ENCODE measurements at regions of chr19 and their contacts with region 1.

Region 1: DNA sequence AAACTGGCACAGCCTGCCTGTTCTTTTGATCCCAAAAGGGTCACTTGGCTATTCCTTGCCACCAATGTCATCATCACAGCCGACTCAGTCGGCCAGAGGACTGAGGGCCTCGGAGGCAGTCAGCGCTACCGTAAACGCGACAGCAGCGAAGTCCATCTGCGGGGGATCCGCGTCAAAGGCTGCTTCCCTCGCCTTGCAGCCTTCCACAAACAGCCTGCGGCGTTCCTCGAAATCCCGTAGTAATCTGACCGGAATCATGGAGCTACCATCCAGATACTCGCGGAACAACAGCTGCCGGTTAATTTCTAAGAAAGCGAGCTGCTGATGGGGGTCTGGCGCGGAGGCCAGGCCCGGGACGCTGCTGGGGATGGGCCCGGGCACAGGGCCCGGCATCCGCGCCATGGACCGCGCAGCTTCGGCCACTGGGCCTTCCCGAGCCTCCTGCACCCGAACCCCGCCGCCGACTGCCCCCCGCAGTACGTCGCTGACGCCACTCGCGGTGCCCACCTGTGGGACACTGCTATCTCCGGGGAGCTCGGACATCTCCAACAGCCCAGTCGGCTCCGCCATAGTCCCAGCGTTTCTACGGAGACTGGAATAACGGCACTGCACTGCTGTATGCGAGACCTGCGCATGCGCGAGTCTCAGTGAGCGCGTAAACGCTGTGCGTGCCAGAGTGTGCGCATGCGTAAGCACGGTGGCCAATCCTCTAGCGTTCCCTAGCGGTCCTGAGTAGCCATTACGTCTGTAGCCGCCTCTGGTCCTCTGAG is at the start of gene EID2B:
- DNase-seq: peak; percentile 95
- H3K4me3 ChIP-seq: peak within 1 kb of the TSS; percentile 76 to 83
- H3K27ac ChIP-seq: peak within 1 kb of the TSS; percentile 54 to 77
- H3K4me1 ChIP-seq: no peaks in the 10 kb centered on the region; a peak in 2 of 4 replicates
- H3K27me3 ChIP-seq: no peaks in the 10 kb centered on the region
- CTCF ChIP-seq: peak; percentile 92
- EP300 ChIP-seq: no peak
- RAD21 ChIP-seq: peak; percentile 99
- polyA plus RNA-seq, gene EID2B: 5.4 and 6.5 TPM in 2 replicates

Region 2: GRCh38 chr19:39412100-39412866 is 120.1 kb before region 1 on chr19 and contains the start of gene PLEKHG2:
- CTCF ChIA-PET with region 1: interaction called, 13 read pairs
- POLR2A ChIA-PET with region 1: no interaction called
- DNase-seq: peak; percentile 95
- H3K4me3 ChIP-seq: peak within 1 kb of the TSS; percentile 92 to 96
- H3K27ac ChIP-seq: peak within 1 kb of the TSS; percentile 94 to 96
- H3K4me1 ChIP-seq: peaks cover 29 to 44% of the 10 kb centered on the region in 2 experiments; a peak in 3 of 4 replicates
- H3K27me3 ChIP-seq: no peaks in the 10 kb centered on the region
- CTCF ChIP-seq: peak; percentile 88
- EP300 ChIP-seq: 0 out of 4 replicates have a peak, but pooled peaks of 1 of the 2 experiments have one; percentile 42
- RAD21 ChIP-seq: peak; percentile 27; the same call in 1 of the 2 replicates
- polyA plus RNA-seq, gene PLEKHG2: 13.6 and 13.8 TPM in 2 replicates

Region 3: DNA sequence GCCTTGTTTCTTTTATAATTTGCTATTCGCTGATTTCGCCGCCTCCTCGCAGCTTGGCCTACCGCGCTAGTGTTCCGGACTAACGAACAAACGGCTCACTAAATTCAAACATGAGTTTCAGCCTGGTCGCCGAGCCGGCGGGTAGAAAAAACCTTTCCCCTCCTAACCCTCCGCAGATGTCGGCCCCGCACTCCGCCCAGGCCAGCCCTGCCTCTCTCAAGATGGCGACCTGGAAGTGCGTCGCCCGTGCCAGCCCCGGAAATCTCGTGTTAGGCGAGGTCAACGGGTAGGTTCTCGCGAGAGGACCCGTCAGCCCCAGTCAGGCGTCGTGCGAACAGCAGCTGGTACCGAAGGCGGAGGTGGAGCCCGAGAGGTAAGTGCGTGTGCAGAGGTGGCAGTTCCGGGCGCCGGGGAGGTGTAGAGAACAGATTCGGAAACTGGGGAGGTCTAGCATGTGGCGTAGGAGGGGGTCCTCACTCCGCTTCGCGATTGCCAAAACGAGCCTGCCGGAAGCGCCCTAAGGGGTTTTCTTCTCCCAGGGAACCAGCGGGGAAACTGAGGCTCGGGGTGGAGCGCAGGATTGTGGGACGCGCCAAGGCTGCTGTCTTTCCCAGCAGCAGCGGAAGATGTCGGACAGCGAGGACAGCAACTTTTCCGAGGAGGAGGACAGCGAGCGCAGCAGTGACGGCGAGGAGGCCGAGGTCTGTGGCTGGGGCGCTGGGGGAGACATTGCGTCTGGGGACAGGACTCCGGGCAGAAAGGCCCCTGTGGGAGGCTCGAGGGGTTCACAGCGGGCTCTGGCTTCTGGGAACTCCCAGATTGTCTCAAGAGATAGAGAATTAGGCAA is 86.9 kb before region 1 on chr19 and contains the start of gene SUPT5H:
- CTCF ChIA-PET with region 1: interaction called, 57 read pairs
- POLR2A ChIA-PET with region 1: interaction called, 3 read pairs
- DNase-seq: peak; percentile 96
- H3K4me3 ChIP-seq: peak within 1 kb of the TSS; percentile 71 to 93
- H3K27ac ChIP-seq: peak within 1 kb of the TSS; percentile 83 to 96
- H3K4me1 ChIP-seq: peaks cover 4 to 12% of the 10 kb centered on the region in 2 experiments; a peak in 3 of 4 replicates
- H3K27me3 ChIP-seq: no peaks in the 10 kb centered on the region
- CTCF ChIP-seq: no peak
- EP300 ChIP-seq: no peak
- RAD21 ChIP-seq: no peak
- polyA plus RNA-seq, gene SUPT5H: 115 and 137 TPM in 2 replicates

Region 4: DNA sequence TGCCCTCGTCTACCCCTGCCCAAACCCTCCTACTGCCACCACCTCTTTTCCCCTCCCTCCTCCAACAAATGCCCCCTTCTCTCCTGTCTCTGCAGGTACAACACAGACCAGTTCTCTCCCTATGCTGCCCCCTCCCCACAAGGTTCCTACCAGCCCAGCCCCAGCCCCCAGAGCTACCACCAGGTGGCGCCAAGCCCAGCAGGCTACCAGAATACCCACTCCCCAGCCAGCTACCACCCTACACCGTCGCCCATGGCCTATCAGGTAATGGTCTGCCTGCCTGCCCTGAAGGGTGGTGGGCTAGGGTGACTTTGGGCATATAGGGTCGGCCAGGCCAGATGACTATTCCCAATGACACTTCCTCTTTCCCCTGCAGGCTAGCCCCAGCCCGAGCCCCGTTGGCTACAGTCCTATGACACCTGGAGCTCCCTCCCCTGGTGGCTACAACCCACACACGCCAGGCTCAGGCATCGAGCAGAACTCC is 58.2 kb before region 1 on chr19:
- CTCF ChIA-PET with region 1: interaction called, 96 read pairs
- POLR2A ChIA-PET with region 1: no interaction called
- DNase-seq: peak; percentile 91
- H3K4me3 ChIP-seq: peak overlapping the region in 1 of 2 experiments; percentile 51; a peak in 1 of 4 replicates
- H3K27ac ChIP-seq: no peak overlapping the region
- H3K4me1 ChIP-seq: no peaks in the 10 kb centered on the region
- H3K27me3 ChIP-seq: no peaks in the 10 kb centered on the region
- CTCF ChIP-seq: peak; percentile 83
- EP300 ChIP-seq: no peak
- RAD21 ChIP-seq: peak; percentile 55

Region 5: DNA sequence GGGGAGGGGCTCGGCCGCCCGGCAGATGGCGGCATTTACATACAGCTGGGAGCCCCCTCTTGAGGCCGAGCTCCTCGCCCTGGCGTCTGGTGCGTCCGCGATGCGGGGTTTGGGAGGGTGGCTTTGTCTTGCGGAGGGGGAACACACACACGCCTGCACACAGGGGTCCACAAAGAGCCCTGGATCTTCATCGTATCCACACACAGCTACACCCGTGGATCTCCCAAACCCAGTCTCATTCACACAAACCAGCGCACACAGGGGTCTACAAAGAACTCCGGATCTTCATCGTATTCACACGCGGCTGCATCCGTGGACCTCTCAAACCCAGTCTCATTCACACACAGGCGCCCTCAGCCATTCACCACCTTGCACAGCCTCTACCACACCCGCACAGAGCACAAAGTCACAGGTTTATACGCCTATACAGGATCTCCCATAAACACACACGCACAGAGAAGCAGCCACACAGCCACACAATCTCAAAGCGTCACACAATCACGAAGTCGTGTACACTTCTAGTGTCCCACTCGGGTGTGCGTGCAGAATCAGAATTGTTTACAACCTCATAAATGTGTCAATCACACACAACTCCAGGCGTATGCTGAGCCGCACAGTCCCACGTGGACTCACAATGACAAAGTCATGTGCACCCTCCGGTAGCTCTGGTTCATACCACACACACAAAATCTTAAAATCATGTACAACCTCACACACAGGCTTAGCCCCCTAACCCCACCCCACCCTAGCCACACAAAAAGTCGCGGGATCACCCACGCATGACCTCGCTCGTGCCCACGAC is 34.2 kb before region 1 on chr19:
- CTCF ChIA-PET with region 1: interaction called, 44 read pairs
- POLR2A ChIA-PET with region 1: interaction called, 4 read pairs
- DNase-seq: peak; percentile 88
- H3K4me3 ChIP-seq: peak overlapping the region in 1 of 2 experiments; percentile 20; a peak in 2 of 4 replicates
- H3K27ac ChIP-seq: peak overlapping the region in 1 of 2 experiments; percentile 40; a peak in 1 of 4 replicates
- H3K4me1 ChIP-seq: peaks cover 0 to 9% of the 10 kb centered on the region in 2 experiments; a peak in 1 of 4 replicates
- H3K27me3 ChIP-seq: no peaks in the 10 kb centered on the region; the same call in 1 of the 2 replicates
- CTCF ChIP-seq: peak; percentile 47
- EP300 ChIP-seq: no peak
- RAD21 ChIP-seq: peak; percentile 65

Region 6: GRCh38 chr19:39518458-39518857 is 14.0 kb before region 1 on chr19:
- CTCF ChIA-PET with region 1: interaction called, 19 read pairs
- POLR2A ChIA-PET with region 1: no interaction called
- DNase-seq: no peak
- H3K4me3 ChIP-seq: no peak overlapping the region
- H3K27ac ChIP-seq: no peak overlapping the region
- H3K4me1 ChIP-seq: peaks cover 0 to 6% of the 10 kb centered on the region in 2 experiments; a peak in 1 of 4 replicates
- H3K27me3 ChIP-seq: peaks cover 21% of the 10 kb centered on the region
- CTCF ChIP-seq: no peak
- EP300 ChIP-seq: no peak
- RAD21 ChIP-seq: no peak

Region 7: DNA sequence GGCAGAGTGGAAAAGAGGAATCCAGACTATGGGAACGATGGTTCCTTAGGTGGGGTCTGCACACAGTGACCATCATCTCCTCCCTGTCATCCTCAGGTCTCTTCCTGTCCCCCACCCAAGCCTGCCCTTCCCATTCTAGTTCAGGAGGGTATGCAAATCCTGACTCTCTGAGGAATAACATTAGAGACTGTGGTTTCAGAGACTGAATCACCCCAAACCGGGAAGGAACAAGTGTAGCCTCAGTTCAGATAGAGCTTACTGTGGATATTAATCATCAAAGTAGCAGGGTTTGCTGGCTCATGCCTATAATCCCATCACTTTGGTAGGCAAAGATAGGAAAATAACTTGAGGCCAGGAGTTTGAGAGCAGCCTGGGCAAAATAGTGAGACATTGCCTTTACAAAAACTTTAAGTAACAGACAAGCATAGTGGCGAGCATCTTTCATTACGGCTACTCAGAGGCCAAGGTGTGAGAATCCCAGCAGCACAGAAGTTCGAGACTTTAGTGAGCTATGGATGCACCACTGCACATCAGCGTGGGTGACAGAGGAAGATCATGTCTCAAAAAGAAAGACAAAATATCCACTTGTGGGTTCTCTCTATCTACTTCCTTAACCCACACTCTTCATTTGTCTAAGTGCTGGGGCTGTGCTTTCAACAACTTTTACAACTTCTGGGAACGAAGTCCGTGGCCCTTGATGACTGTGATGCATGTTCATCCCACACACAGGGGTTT is 50.6 kb after region 1 on chr19:
- CTCF ChIA-PET with region 1: no interaction called
- POLR2A ChIA-PET with region 1: no interaction called
- DNase-seq: no peak
- H3K4me3 ChIP-seq: no peak overlapping the region
- H3K27ac ChIP-seq: no peak overlapping the region
- H3K4me1 ChIP-seq: no peaks in the 10 kb centered on the region
- H3K27me3 ChIP-seq: no peaks in the 10 kb centered on the region; the same call in 1 of the 2 replicates
- CTCF ChIP-seq: no peak
- EP300 ChIP-seq: no peak
- RAD21 ChIP-seq: no peak

Measured in SK-N-SH (cell line).